ENCODE measurements at regions of chr13 and their contacts with region 1.

Region 1: GRCh38 chr13:96018135-96018534 is 35.1 kb downstream of the UGGT2 start:
- DNase-seq: no peak
- H3K4me3 ChIP-seq: no peak overlapping the region
- H3K27ac ChIP-seq: no peak overlapping the region
- H3K4me1 ChIP-seq: peaks cover 0 to 7% (median 2%) of the 10 kb centered on the region in 4 donors
- H3K27me3 ChIP-seq: no peaks in the 10 kb centered on the region
- CTCF ChIP-seq: no peak
- EP300 ChIP-seq: no peak
- POLR2A ChIP-seq: no peak

Region 2: GRCh38 chr13:96104516-96104915 is 86.4 kb after region 1 on chr13:
- intact Hi-C with region 1: no loop called
- DNase-seq: peak in 1 of 2 donors; percentile 16
- H3K4me3 ChIP-seq: no peak overlapping the region
- H3K27ac ChIP-seq: no peak overlapping the region
- H3K4me1 ChIP-seq: no peaks in the 10 kb centered on the region
- H3K27me3 ChIP-seq: no peaks in the 10 kb centered on the region
- CTCF ChIP-seq: no peak
- EP300 ChIP-seq: no peak
- POLR2A ChIP-seq: no peak

Region 3: GRCh38 chr13:96229356-96229755 is 211.2 kb after region 1 on chr13:
- intact Hi-C with region 1: loop called (anchors 5 kb)
- DNase-seq: no peak
- H3K4me3 ChIP-seq: no peak overlapping the region
- H3K27ac ChIP-seq: no peak overlapping the region
- H3K4me1 ChIP-seq: no peaks in the 10 kb centered on the region
- H3K27me3 ChIP-seq: no peaks in the 10 kb centered on the region
- CTCF ChIP-seq: peak in 1 of 7 experiments; percentile 17
- EP300 ChIP-seq: no peak
- POLR2A ChIP-seq: no peak